SK-N-SH (cell line): ENCODE measurements at regions of chr7 and their contacts with region 1.

Region 1: DNA sequence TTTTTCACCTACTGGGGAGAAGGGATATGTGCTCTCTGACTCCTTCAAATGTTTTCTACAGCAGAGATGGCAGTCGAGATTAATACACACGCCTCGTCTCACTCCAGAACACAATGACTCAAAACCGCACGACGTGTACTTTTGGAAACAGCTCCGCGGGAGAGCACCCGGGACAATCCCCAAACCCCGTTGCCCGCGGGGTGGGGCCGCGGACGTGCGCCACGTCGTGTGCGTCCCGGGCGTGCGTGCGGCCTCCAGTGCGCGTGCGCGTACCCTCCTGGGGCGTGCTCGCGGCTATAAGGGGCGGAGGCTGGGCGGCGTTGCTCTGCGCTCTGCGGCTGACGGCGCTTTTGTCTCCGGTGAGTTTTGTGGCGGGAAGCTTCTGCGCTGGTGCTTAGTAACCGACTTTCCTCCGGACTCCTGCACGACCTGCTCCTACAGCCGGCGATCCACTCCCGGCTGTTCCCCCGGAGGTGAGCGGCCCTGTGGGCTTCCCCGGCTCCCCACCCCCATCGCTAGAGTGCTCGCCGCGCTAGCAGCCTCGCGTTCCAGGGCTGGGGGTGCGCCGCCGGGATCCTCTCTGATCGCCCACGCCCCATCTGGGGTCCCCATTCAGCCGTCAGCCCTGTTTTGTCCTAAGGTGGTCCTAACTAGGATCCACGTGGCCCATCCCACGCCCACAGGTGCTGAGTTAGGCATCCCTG is at the start of gene HILPDA:
- DNase-seq: peak; percentile 99
- H3K4me3 ChIP-seq: peak within 1 kb of the TSS; percentile 89 to 99
- H3K27ac ChIP-seq: peak within 1 kb of the TSS; percentile 81 to 91
- H3K4me1 ChIP-seq: peaks cover 25 to 38% of the 10 kb centered on the region in 2 experiments; a peak in 3 of 4 replicates
- H3K27me3 ChIP-seq: no peaks in the 10 kb centered on the region
- CTCF ChIP-seq: no peak
- EP300 ChIP-seq: peak in 1 of 2 experiments; percentile 20; a peak in 1 of 4 replicates
- RAD21 ChIP-seq: no peak
- polyA plus RNA-seq, gene HILPDA: 24.0 and 29.1 TPM in 2 replicates

Region 2: DNA sequence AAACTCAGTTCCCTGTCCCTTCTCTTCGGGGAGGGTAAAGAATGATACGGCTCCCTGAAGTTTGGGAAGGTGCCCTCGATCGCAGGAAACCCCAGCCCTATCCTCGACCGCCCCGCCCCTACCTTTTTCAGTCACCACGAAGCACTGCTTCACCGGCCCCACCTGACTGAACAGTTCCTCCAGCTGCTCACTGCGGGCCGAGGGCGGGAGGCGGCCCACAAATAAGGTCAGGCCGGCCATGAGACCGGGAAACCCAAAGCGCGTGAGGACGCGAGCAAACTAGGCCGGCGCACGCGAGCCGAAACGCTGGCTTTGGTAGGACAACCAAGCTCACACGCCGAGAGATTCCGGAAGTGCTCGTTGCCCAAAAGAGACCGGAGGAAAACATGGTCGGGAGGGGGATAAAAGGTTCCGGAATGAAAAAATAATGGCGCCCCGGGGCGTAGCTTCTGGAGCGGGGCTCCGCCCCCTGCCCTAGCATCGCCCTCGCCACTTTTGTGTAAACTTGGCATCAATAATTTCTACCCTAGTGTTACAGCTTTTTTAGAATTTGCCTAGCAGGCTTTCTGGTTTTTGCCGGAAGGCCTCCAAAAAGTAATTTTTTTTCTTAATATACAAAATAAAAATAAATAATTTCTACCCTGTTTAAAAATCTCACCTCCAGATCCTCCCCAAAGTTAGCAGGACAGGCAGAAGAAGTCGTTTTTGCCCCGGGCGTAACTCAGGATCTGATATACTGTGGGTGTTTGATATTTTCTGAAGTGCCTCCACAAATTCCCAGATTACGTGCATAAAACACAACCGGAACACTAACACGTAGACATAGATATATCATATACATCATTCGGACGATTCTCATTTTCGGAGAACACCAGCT is 111.9 kb before region 1 on chr7 and contains the start of gene RBM28:
- CTCF ChIA-PET with region 1: interaction called, 62 read pairs
- POLR2A ChIA-PET with region 1: interaction called, 7 read pairs
- DNase-seq: peak; percentile 94
- H3K4me3 ChIP-seq: peak within 1 kb of the TSS; percentile 60 to 80
- H3K27ac ChIP-seq: peak within 1 kb of the TSS; percentile 73 to 86
- H3K4me1 ChIP-seq: peaks cover 0 to 28% of the 10 kb centered on the region in 2 experiments; a peak in 2 of 4 replicates
- H3K27me3 ChIP-seq: no peaks in the 10 kb centered on the region
- CTCF ChIP-seq: no peak
- EP300 ChIP-seq: peak in 1 of 2 experiments; percentile 70; a peak in 1 of 4 replicates
- RAD21 ChIP-seq: peak; percentile 31; the same call in 1 of the 2 replicates
- polyA plus RNA-seq, gene RBM28: 29.1 and 33.0 TPM in 2 replicates

Region 3: GRCh38 chr7:128387216-128388144 is 68.2 kb before region 1 on chr7:
- CTCF ChIA-PET with region 1: interaction called, 20 read pairs
- POLR2A ChIA-PET with region 1: no interaction called
- DNase-seq: peak; percentile 99
- H3K4me3 ChIP-seq: peak overlapping the region in 1 of 2 experiments; percentile 16; a peak in 2 of 4 replicates
- H3K27ac ChIP-seq: peak overlapping the region in 1 of 2 experiments; percentile 94; a peak in 2 of 4 replicates
- H3K4me1 ChIP-seq: peaks cover 0 to 41% of the 10 kb centered on the region in 2 experiments; a peak in 1 of 4 replicates
- H3K27me3 ChIP-seq: no peaks in the 10 kb centered on the region
- CTCF ChIP-seq: peak; percentile 98
- EP300 ChIP-seq: peak in 1 of 2 experiments; percentile 57; a peak in 2 of 4 replicates
- RAD21 ChIP-seq: peak; percentile 99

Region 4: GRCh38 chr7:128409596-128410160 is 46.0 kb before region 1 on chr7 and contains the start of gene IMPDH1:
- CTCF ChIA-PET with region 1: interaction called, 67 read pairs
- POLR2A ChIA-PET with region 1: interaction called, 3 read pairs
- DNase-seq: peak; percentile 100
- H3K4me3 ChIP-seq: peak within 1 kb of the TSS; percentile 69 to 83
- H3K27ac ChIP-seq: peak within 1 kb of the TSS; percentile 35 to 79; a peak in 3 of 4 replicates
- H3K4me1 ChIP-seq: peaks cover 16 to 27% of the 10 kb centered on the region in 2 experiments; a peak in 2 of 4 replicates
- H3K27me3 ChIP-seq: no peaks in the 10 kb centered on the region
- CTCF ChIP-seq: no peak
- EP300 ChIP-seq: no peak
- RAD21 ChIP-seq: no peak
- polyA plus RNA-seq, gene IMPDH1: 80.4 and 82.0 TPM in 2 replicates

Region 5: DNA sequence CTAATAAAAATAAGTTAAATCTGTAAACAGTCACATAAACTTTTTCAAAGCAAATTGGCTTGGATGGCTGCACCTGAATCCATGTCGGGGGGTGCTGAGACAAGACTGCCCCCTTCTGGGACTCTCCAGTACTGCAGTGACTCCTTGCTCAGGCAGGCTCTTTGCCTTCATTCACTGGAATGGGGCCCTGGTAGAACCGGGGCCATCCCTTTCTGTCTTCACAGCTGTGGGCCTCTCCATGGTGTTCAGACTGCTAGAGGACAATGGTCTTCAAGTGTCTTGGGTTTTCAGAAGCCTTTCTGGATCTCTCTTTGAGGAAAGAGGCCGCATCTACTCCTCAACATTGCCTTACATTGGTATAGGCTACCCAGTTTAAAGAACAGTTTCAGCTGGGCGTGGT is 29.9 kb before region 1 on chr7:
- CTCF ChIA-PET with region 1: interaction called, 418 read pairs
- POLR2A ChIA-PET with region 1: interaction called, 7 read pairs
- DNase-seq: peak; percentile 83
- H3K4me3 ChIP-seq: no peak overlapping the region; a peak in 1 of 4 replicates
- H3K27ac ChIP-seq: no peak overlapping the region
- H3K4me1 ChIP-seq: peaks cover 0 to 3% of the 10 kb centered on the region in 2 experiments; a peak in 1 of 4 replicates
- H3K27me3 ChIP-seq: no peaks in the 10 kb centered on the region
- CTCF ChIP-seq: peak; percentile 100
- EP300 ChIP-seq: no peak
- RAD21 ChIP-seq: peak; percentile 95

Region 6: GRCh38 chr7:128437426-128438332 is 18.0 kb before region 1 on chr7:
- CTCF ChIA-PET with region 1: interaction called, 92 read pairs
- POLR2A ChIA-PET with region 1: interaction called, 5 read pairs
- DNase-seq: no peak
- H3K4me3 ChIP-seq: no peak overlapping the region
- H3K27ac ChIP-seq: no peak overlapping the region
- H3K4me1 ChIP-seq: 0 out of 4 replicates have a peak, but pooled peaks cover 0 to 7% of the 10 kb centered on the region in 2 experiments
- H3K27me3 ChIP-seq: no peaks in the 10 kb centered on the region
- CTCF ChIP-seq: no peak
- EP300 ChIP-seq: no peak
- RAD21 ChIP-seq: no peak

Region 7: GRCh38 chr7:128530855-128531104 is 75.1 kb after region 1 on chr7:
- CTCF ChIA-PET with region 1: no interaction called
- POLR2A ChIA-PET with region 1: no interaction called
- DNase-seq: no peak
- H3K4me3 ChIP-seq: peak overlapping the region; percentile 67 to 76
- H3K27ac ChIP-seq: peak overlapping the region; percentile 38 to 85; a peak in 3 of 4 replicates
- H3K4me1 ChIP-seq: peaks cover 5 to 7% of the 10 kb centered on the region in 2 experiments; a peak in 3 of 4 replicates
- H3K27me3 ChIP-seq: no peaks in the 10 kb centered on the region
- CTCF ChIP-seq: no peak
- EP300 ChIP-seq: no peak
- RAD21 ChIP-seq: no peak